ENCODE measurements at regions of chr4 and their contacts with region 1.

Region 1: DNA sequence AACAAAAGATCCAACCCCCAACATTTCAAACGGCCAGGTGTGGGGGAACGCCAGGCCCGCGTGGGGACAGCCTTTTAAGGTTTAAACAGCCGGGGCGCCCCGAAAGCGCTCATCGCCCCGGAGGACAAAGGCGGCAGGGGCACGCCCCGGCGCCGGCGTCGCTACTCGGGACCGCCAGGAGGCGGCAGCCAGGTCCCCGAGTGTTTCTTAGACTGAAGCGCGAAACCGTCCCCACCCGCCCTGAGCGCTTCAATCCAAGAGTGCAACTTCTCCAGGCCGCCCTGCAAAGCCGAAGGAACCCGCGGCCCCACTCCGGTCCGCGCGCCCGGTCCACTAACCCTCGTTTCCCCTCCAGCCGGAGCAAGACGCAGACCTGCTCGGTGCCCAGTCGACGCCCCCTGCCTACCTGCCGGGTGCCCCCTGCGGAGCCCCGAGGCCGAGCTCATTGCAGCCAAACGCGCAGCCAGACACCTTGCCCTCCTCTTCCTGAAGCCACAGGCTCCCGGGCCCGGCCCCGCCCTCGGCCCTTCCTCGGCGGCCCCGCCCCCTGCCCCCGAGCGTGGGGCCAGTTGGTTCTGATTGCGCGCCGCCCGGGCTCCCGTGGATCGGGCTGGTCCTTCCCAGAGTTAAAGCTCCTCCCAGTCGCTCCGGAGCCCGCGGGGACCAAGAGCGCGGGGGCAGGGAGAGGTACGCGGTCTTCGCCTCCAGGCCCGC is at the start of gene CASP6:
- DNase-seq: peak; percentile 83
- H3K4me3 Mint-ChIP-seq: peak within 1 kb of the TSS; percentile 93
- H3K27ac Mint-ChIP-seq: peak within 1 kb of the TSS; percentile 87
- H3K4me1 Mint-ChIP-seq: peaks cover 38% of the 10 kb centered on the region
- H3K27me3 Mint-ChIP-seq: no peaks in the 10 kb centered on the region
- total RNA-seq, gene CASP6: 30.5 to 32.4 TPM

Region 2: GRCh38 chr4:109690690-109691410 is 12.3 kb before region 1 on chr4:
- CTCF ChIA-PET with region 1: interaction called, 12 read pairs
- POLR2A ChIA-PET with region 1: interaction called, 33 read pairs
- DNase-seq: no peak
- H3K4me3 Mint-ChIP-seq: no peak overlapping the region
- H3K27ac Mint-ChIP-seq: peak overlapping the region; percentile 64
- H3K4me1 Mint-ChIP-seq: peaks cover 35% of the 10 kb centered on the region
- H3K27me3 Mint-ChIP-seq: no peaks in the 10 kb centered on the region

Region 3: GRCh38 chr4:109739570-109739969 is 36.5 kb after region 1 on chr4:
- CTCF ChIA-PET with region 1: no interaction called
- POLR2A ChIA-PET with region 1: no interaction called
- DNase-seq: no peak
- H3K4me3 Mint-ChIP-seq: no peak overlapping the region
- H3K27ac Mint-ChIP-seq: no peak overlapping the region
- H3K4me1 Mint-ChIP-seq: no peaks in the 10 kb centered on the region
- H3K27me3 Mint-ChIP-seq: peaks cover 5% of the 10 kb centered on the region

Region 4: DNA sequence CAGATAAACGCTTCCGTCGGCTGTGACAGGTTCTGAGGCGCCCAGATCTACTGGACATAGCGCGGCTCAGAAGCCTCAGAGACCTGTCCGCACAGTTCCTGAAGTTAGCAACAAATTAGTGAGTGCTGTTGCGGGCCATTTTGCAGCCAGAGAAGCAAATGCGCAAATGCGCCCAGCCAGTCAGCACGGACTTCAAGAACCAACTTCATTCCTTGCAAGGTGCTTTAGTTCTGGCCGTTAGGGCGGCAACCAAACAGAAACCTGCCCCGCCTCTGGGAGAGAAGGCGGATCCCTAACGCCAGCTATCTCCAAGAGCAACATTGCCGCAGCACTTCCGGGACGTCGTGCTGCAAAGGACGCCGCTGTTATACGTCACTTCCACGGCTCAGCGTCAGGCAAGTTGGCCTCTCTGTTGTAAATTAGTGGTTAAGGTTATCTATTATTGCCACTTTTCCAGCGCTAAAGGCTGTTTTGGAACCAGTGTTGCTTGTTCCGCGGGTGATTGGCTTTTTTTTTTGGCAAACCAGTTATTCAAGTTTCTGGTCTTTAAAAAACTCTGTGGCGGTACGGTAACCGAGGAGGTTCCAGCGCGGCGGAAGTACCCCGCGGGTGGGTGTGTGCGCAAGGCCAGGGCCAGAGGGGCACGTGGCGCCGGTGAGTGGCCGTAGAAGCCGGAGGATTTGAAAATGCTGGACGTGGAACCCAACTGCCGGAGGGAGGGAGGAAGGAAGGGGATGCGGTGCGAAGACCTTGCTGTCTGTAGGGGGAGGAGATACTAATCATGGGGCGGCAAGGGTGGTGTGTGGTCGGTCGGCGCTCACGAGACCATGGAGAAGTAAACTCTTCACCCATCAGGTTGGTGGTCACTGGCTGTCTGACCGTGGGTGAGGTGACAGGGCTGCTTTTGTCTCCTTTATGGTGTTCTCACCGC is 112.3 kb after region 1 on chr4 and contains the start of gene GAR1:
- CTCF ChIA-PET with region 1: interaction called, 6 read pairs
- POLR2A ChIA-PET with region 1: interaction called, 11 read pairs
- DNase-seq: peak; percentile 93
- H3K4me3 Mint-ChIP-seq: peak within 1 kb of the TSS; percentile 98
- H3K27ac Mint-ChIP-seq: peak within 1 kb of the TSS; percentile 97
- H3K4me1 Mint-ChIP-seq: peaks cover 69% of the 10 kb centered on the region
- H3K27me3 Mint-ChIP-seq: no peaks in the 10 kb centered on the region
- total RNA-seq, gene GAR1: 26.1 to 27.5 TPM

Region 5: GRCh38 chr4:109826719-109827118 is 123.6 kb after region 1 on chr4:
- CTCF ChIA-PET with region 1: interaction called, 15 read pairs
- POLR2A ChIA-PET with region 1: interaction called, 6 read pairs
- DNase-seq: no peak
- H3K4me3 Mint-ChIP-seq: no peak overlapping the region
- H3K27ac Mint-ChIP-seq: no peak overlapping the region
- H3K4me1 Mint-ChIP-seq: peaks cover 5% of the 10 kb centered on the region
- H3K27me3 Mint-ChIP-seq: no peaks in the 10 kb centered on the region